HCT116 (cell line): ENCODE measurements at regions of chr11 and their contacts with region 1.

Region 1: GRCh38 chr11:119108146-119108856 is 1.2 kb downstream of the C2CD2L start:
- DNase-seq: no peak
- ATAC-seq: peak; percentile 35
- H3K4me3 ChIP-seq: peak overlapping the region; percentile 72 to 85
- H3K27ac ChIP-seq: peak overlapping the region; percentile 75
- H3K4me1 ChIP-seq: peaks cover 28 to 38% of the 10 kb centered on the region in 2 experiments
- H3K27me3 ChIP-seq: no peaks in the 10 kb centered on the region
- CTCF ChIP-seq: no peak
- POLR2A ChIP-seq: no peak
- RAD21 ChIP-seq: no peak

Region 2: GRCh38 chr11:119121008-119121810 is 12.9 kb after region 1 on chr11 and contains the start of gene HINFP:
- CTCF ChIA-PET with region 1: no interaction called
- POLR2A ChIA-PET with region 1: interaction called, 14 read pairs
- RAD21 ChIA-PET with region 1: no interaction called
- intact Hi-C with region 1: no loop called
- DNase-seq: peak; percentile 97
- ATAC-seq: peak; percentile 97
- H3K4me3 ChIP-seq: peak within 1 kb of the TSS; percentile 97 to 99
- H3K27ac ChIP-seq: peak within 1 kb of the TSS; percentile 62
- H3K4me1 ChIP-seq: peaks cover 16 to 30% of the 10 kb centered on the region in 2 experiments
- H3K27me3 ChIP-seq: no peaks in the 10 kb centered on the region
- CTCF ChIP-seq: no peak
- POLR2A ChIP-seq: peak; percentile 84
- RAD21 ChIP-seq: no peak
- total RNA-seq, gene HINFP: 38.1 TPM